Endothelial cell of umbilical vein (primary cell): ENCODE measurements at regions of chr10 and their contacts with region 1.

Region 1: DNA sequence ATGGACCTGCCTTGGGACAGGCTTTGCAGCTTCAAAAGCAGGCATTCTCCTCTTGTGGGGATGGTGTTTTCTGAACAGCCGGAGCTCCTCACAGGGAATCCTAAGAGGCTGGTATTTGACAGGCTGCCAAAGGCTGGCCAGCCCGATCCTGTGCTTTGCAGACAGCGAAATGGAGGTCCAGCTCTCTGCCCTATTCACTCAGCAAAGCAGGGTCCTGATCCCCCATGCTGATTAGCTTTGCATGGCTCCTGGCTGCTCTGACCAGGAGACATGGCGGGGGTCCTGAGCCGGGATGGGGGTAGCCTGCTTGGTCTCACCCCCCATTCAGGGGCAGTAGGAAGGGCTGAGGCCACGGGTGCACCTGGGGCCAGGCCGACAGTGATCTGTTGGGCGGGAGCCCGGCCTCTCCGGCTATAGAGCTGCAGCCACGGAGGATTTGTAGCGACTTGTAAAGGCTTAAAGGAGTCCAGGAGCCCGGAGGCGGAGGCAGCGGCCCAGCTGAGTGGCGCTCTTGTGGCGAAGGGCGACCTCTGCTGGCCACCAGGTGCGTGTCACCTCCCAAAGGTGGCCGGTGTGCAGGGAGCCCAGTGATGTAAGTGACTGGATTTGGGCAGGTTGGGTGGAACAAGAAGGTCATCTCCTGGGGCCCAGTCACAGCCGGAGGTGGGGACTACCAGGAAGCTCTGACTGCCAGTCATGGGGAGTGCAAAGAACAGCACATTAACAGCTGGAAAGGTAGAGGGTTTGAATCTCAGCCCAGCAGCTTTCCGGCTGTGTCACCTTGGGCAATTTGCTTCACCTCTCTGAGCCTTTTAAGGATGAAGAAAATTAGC is 126.5 kb downstream of the ZMIZ1 start:
- DNase-seq: peak; percentile 84
- H3K4me3 ChIP-seq: no peak overlapping the region
- H3K27ac ChIP-seq: no peak overlapping the region
- H3K4me1 ChIP-seq: peaks cover 17% of the 10 kb centered on the region
- H3K27me3 ChIP-seq: no peaks in the 10 kb centered on the region
- CTCF ChIP-seq: peak; percentile 88 to 93
- POLR2A ChIP-seq: no peak

Region 2: GRCh38 chr10:78211561-78212051 is 983.7 kb before region 1 on chr10:
- CTCF ChIA-PET with region 1: interaction called, 8 read pairs
- POLR2A ChIA-PET with region 1: no interaction called
- dilution Hi-C with region 1: no loop called
- intact Hi-C with region 1: loop called (anchors 1 kb)
- DNase-seq: peak; percentile 55
- H3K4me3 ChIP-seq: no peak overlapping the region
- H3K27ac ChIP-seq: no peak overlapping the region
- H3K4me1 ChIP-seq: no peaks in the 10 kb centered on the region
- H3K27me3 ChIP-seq: peaks cover 4 to 5% of the 10 kb centered on the region in 2 experiments
- CTCF ChIP-seq: peak; percentile 49 to 65
- POLR2A ChIP-seq: no peak

Region 3: DNA sequence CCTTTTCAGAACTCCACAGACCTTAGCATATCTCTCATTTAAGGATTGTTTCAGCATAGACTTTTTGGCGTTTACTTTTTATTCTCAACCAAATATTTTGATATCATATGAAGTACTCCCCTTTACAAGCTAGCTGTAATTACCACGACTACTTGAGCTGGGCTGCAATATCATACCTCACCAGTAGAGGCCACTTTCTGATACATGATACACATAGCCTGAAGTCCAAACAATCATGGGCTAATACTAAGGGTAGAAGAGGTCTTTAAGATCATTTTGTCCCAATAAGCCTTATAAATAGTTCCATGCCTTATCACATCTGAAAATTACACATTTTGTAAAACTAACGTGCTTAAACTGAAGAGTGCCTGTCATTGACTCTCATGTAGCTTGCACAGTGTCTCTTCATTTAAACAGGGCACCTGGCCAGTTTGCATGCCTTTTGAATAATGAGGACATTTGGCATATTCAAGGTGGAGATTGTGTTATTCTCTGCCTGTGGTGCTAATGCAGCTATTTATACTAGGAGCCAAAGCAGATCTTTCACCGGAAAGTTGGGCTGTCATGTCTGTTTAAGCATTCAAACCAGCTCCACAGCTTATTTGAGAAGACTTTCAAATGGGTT is 530.3 kb before region 1 on chr10:
- CTCF ChIA-PET with region 1: interaction called, 22 read pairs
- POLR2A ChIA-PET with region 1: no interaction called
- dilution Hi-C with region 1: no loop called
- intact Hi-C with region 1: loop called (anchors 1 kb)
- DNase-seq: peak; percentile 41
- H3K4me3 ChIP-seq: no peak overlapping the region
- H3K27ac ChIP-seq: no peak overlapping the region
- H3K4me1 ChIP-seq: no peaks in the 10 kb centered on the region
- H3K27me3 ChIP-seq: peaks cover 6 to 24% of the 10 kb centered on the region in 2 experiments
- CTCF ChIP-seq: peak; percentile 36 to 46
- POLR2A ChIP-seq: no peak

Region 4: DNA sequence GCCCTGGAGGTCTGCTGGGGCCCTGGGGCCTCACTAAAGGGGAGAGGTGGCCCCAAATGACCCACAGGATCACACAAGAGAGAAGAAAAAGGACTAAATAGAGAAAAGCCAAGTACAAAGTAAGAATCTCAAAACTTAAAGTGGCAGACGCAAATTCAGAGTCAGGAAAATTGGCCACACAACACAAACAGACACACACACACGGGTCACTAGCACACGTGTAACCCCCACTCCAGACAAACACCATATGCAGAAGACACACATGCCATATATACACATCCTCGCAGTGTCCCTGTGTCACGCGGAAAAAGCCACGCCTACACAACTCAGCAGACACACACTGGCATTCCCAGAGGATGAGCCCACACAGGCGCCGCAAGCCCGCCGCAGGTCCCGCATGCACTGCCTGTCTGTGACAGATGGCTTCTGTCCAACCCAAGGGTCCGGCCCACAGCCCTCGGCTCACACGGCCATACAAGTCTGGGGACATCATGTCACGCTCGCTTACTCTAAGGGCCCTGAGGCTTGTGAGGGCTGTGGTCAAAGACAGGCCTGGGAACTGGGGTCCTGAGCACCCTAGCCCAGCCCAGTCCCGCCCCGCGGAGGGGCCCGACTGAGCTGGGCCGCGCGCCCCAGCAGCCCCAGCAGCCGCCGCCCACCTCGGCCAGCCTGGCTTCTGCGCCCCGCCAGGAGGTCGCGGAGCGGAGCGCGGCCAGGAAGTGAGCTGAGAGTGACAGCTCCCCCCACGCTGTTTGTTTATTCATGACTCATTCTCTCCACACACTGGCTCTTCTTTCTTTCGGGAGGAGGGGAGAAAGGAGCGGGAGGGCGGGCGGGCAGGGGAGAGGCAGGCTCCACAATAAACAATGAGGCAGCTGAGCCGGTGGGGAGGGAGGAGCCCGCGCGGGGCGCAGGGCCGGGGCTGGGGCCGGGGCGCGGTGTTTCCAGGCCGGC is 222.1 kb before region 1 on chr10:
- CTCF ChIA-PET with region 1: interaction called, 23 read pairs
- POLR2A ChIA-PET with region 1: no interaction called
- dilution Hi-C with region 1: no loop called
- intact Hi-C with region 1: loop called (anchors 1 kb)
- DNase-seq: peak; percentile 91
- H3K4me3 ChIP-seq: peak overlapping the region in 2 of 3 experiments; percentile 11 to 15
- H3K27ac ChIP-seq: peak overlapping the region; percentile 98
- H3K4me1 ChIP-seq: peaks cover 32% of the 10 kb centered on the region
- H3K27me3 ChIP-seq: no peaks in the 10 kb centered on the region
- CTCF ChIP-seq: no peak
- POLR2A ChIP-seq: peak; percentile 55

Region 5: DNA sequence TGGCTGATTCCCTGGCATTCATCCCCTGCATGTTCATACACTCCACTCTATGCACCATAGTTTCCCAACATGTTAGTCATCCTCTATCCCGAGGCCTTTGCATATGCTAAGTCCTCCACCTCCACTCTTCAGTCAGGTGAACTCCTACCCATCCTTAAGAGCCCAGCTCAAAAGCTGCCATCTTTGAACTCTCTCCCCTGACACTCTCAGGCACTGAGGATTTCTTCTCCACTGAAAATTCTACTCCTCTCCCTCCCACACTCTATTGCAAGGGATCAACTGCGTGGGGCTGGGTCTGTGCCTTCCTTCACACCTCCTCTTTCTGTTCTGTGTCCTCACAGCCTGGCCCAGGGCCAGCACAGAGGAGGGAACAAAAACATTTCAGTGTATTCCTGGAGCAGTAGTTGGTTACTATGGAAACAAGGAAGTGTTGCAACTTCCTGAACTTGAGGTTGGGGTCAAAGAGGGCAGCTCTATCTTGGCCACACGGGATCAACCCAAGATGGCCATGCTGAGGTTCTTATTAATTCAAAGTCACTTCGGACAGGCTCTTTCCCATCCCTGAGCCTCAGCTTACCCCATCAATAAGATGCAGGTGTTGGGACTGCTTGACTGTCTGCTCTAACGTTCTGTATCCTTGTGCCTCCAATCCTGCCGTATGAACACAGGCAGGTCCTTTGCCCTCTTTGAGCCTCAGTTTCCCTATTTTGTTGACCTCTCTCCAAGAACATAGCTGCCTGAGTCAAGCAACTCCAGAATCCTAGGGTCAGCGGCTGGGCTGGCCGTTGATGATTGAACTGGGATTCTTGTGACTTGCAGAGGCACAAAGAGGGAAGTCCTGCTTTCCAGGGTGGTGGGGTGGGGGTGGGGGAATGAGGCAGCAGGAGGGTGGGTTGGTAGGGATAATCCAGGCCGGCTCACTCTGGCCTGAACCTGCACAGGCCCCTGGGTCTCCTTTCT is 111.0 kb before region 1 on chr10:
- CTCF ChIA-PET with region 1: interaction called, 12 read pairs
- POLR2A ChIA-PET with region 1: no interaction called
- dilution Hi-C with region 1: no loop called
- intact Hi-C with region 1: no loop called
- DNase-seq: peak; percentile 95
- H3K4me3 ChIP-seq: no peak overlapping the region
- H3K27ac ChIP-seq: peak overlapping the region; percentile 64
- H3K4me1 ChIP-seq: peaks cover 27% of the 10 kb centered on the region
- H3K27me3 ChIP-seq: no peaks in the 10 kb centered on the region
- CTCF ChIP-seq: no peak
- POLR2A ChIP-seq: peak; percentile 20

Region 6: GRCh38 chr10:79132681-79133381 is 62.5 kb before region 1 on chr10:
- CTCF ChIA-PET with region 1: interaction called, 44 read pairs
- POLR2A ChIA-PET with region 1: no interaction called
- dilution Hi-C with region 1: no loop called
- intact Hi-C with region 1: loop called (anchors 1 kb)
- DNase-seq: no peak
- H3K4me3 ChIP-seq: no peak overlapping the region
- H3K27ac ChIP-seq: no peak overlapping the region
- H3K4me1 ChIP-seq: peaks cover 53% of the 10 kb centered on the region
- H3K27me3 ChIP-seq: no peaks in the 10 kb centered on the region
- CTCF ChIP-seq: no peak
- POLR2A ChIP-seq: no peak

Region 7: DNA sequence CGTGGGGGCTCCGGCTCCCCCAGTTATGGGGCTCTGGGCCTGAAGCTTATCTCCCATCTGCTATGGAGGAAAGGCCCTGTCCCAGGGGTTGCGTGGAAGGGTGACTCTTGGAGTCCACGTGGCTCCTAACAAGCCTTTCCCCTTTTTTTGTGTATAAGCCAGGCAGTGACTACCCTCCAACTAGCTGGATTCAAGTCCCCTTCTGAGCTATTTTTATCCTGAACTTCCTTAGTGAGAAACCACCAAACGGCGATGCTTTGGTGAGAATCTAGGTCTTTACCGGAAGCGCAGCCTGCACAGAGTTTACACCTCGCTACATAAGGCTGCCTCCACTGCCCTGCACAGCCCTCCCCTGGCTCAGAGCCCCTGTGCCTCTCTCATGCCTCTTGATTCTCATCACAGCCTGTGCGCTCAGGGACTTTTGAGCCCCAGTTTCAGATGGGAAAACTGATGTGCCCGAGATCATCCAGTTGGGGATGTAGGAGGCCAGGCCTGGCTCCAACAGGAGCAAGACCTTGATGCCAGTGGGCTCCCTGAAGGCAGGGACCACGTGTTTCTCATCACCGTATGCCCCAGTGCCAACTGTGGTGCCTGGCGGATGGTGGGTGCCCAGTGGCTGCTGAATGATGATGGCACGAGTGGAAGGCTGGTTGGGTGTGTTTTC is 49.7 kb after region 1 on chr10:
- CTCF ChIA-PET with region 1: no interaction called
- POLR2A ChIA-PET with region 1: no interaction called
- dilution Hi-C with region 1: no loop called
- intact Hi-C with region 1: no loop called
- DNase-seq: no peak
- H3K4me3 ChIP-seq: no peak overlapping the region
- H3K27ac ChIP-seq: no peak overlapping the region
- H3K4me1 ChIP-seq: peaks cover 52% of the 10 kb centered on the region
- H3K27me3 ChIP-seq: no peaks in the 10 kb centered on the region
- CTCF ChIP-seq: no peak
- POLR2A ChIP-seq: no peak